Activated T-helper 1 cell treated with anti-CD3 and anti-CD28 coated beads, Interleukin-12 subunit alpha, Interleukin-12 subunit beta, Interleukin-2, Interleukin-4 antibody, amounts not matched to agents 30 ng/mL and 10 ng/mL and 1 ng/mL, durations not matched to agents 14 hours and 24 hours and 36 hours (primary cell): ENCODE measurements at regions of chr20 and their contacts with region 1.

Region 1: DNA sequence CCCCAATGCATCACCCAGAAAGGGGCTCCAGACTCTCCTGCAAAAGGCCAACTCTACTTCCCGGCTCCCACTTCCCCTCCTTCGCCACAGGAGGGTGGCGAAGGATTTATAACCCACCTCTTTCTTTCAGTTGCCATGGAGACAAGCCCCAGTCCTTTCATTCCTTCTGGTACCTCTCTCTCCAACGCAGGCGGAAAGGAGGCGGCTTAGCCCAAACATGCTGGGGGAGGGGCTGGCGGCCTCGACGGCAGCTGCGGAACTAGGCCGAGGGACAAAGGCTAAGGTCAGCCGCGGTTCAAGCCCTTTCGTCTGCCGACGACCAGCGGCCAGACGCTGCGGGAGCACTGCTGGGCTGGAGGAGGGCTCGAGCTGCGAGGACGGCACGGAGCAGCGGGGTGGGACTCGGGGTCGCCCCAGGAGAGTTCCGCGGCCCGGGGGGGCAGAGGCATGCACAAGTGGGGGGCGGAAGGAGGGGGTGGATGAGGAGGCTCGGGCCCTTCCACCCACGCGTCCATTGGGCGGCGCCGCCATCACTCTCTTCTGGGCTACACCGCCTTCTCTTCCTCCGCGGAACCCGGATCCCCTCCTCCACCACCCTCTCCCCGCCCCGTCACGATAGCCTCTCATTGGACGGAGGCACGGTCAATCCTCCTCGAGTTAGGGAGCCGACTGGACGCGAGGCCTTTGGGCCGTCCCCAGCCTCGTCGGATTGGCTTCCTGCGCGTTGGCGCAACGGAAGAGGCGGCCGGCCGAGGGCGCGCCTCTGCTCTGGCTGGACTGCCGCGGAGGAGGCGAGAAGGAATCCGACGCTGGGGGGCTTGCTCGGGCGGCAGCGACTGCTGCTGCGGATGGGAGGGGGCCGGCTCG is at the start of gene PANK2:
- DNase-seq: peak; percentile 98
- H3K4me3 Mint-ChIP-seq: peak within 1 kb of the TSS; percentile 100
- H3K27ac Mint-ChIP-seq: peak within 1 kb of the TSS; percentile 98
- H3K4me1 Mint-ChIP-seq: peaks cover 44% of the 10 kb centered on the region
- H3K27me3 Mint-ChIP-seq: no peaks in the 10 kb centered on the region
- total RNA-seq, gene PANK2: 51.4 and 54.6 TPM in 2 replicates

Region 2: DNA sequence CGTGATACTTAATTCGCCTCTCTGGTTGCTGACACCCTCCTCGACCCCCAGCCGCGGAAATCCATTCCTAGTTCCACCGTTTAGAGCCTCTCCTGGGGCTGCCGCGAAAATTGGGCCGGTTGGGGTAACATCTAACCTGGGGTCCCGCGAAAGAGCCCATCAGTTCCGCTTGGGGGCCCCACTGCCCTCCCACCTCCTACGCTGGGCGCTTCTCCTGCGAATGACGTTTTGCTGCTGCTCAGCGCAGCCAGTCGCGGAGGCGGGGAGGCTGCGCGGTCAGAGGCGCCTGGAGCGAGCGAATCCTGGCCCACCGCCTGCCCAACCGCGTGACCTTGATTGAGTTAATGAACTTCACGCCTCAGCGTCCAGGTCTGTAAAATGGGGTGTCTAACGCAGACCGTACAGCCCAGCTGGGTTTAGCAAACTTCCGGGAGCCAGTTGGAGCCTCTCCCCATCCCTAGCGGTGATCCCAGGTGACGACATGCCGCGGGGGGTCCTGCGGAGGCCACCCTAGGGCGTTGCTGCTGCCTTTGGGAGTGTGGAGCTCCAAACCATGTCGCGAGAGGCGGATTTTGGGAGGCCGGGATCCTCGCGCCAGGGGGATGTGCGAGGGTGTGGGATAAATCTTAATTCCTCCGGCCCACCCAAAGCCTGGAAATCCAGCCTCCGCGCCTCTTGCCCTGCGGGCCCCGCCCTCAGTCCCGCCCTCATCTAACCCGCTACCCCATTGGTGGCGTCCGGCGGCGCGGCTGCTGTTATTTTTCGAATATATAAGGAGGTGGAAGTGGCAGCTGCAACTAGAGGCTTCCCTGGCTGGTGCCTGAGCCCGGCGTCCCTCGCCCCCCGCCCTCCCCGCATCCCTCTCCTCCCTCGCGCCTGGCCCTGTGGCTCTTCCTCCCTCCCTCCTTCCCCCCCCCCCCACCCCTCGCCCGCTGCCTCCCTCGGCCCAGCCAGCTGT is 93.1 kb before region 1 on chr20 and contains the start of gene CDC25B:
- intact Hi-C with region 1: loop called (anchors 2 kb)
- DNase-seq: peak; percentile 81
- H3K4me3 Mint-ChIP-seq: peak within 1 kb of the TSS; percentile 93
- H3K27ac Mint-ChIP-seq: peak within 1 kb of the TSS; percentile 96
- H3K4me1 Mint-ChIP-seq: peaks cover 47% of the 10 kb centered on the region
- H3K27me3 Mint-ChIP-seq: no peaks in the 10 kb centered on the region
- total RNA-seq, gene CDC25B: 71.7 and 76.2 TPM in 2 replicates

Region 3: GRCh38 chr20:3846740-3847428 is 42.0 kb before region 1 on chr20 and contains the start of gene MAVS:
- intact Hi-C with region 1: loop called (anchors 1 kb)
- DNase-seq: peak; percentile 87
- H3K4me3 Mint-ChIP-seq: peak within 1 kb of the TSS; percentile 90
- H3K27ac Mint-ChIP-seq: peak within 1 kb of the TSS; percentile 81
- H3K4me1 Mint-ChIP-seq: peaks cover 22% of the 10 kb centered on the region
- H3K27me3 Mint-ChIP-seq: no peaks in the 10 kb centered on the region
- total RNA-seq, gene MAVS: 40.8 TPM in 2 replicates

Region 4: DNA sequence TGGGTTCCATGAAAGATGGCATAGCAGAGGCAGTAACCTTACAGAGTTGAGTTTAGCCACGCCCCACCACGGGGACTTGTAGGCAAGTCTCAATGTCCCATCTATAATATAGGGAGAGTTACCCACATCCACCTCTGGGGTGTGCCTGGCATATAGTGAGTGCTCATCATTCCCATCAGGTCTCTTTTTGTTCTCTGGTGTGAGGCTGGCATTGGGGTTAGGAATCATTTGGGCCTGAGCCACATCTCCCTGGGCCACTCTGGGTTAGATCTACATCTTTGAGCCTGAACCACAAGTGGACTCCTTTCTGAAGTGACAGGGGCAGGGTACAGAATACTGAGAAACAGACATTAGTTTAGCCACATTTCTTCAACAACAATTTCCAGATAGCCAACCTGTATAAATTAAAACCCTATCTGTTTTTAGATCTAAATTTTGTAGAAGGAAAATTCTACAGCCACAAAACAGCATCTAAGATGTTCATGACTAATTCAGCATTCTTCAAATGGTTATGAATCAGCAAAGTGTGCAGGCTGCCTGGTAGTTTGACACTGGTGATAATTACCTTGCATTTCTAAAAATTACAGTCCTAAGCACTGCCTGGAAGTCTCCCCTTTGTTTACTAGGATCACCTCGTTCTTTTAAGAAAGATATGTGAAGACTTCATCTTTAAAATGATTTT is 106.4 kb after region 1 on chr20:
- intact Hi-C with region 1: loop called (anchors 5 kb)
- DNase-seq: no peak
- H3K4me3 Mint-ChIP-seq: peak overlapping the region; percentile 55
- H3K27ac Mint-ChIP-seq: peak overlapping the region; percentile 90
- H3K4me1 Mint-ChIP-seq: peaks cover 57% of the 10 kb centered on the region
- H3K27me3 Mint-ChIP-seq: no peaks in the 10 kb centered on the region

Region 5: DNA sequence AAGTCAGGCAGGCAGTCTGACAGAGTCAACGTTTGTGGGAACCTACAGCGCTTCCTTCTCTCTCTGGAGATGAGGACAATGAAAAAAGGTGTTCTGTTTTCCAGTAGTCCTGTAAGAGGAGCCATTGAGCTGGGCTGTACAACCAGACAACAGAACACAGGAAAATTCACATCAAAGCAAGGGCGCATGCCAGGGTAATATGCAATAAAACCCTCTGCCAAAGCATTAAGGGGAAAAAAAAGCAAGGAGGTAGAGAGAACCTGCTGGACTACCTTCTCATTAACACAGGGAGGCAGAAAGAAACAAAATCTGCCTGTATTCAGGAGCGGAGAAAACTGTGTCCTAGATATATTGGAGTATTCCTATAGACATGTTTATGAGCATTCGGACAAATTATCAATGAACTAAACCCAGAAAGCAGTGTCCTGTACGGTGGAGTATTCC is 125.2 kb after region 1 on chr20:
- intact Hi-C with region 1: loop called (anchors 1 kb)
- DNase-seq: no peak
- H3K4me3 Mint-ChIP-seq: peak overlapping the region; percentile 87
- H3K27ac Mint-ChIP-seq: peak overlapping the region; percentile 78
- H3K4me1 Mint-ChIP-seq: peaks cover 57% of the 10 kb centered on the region
- H3K27me3 Mint-ChIP-seq: peaks cover 4% of the 10 kb centered on the region